ENCODE measurements at regions of chr13 and their contacts with region 1.

Region 1: DNA sequence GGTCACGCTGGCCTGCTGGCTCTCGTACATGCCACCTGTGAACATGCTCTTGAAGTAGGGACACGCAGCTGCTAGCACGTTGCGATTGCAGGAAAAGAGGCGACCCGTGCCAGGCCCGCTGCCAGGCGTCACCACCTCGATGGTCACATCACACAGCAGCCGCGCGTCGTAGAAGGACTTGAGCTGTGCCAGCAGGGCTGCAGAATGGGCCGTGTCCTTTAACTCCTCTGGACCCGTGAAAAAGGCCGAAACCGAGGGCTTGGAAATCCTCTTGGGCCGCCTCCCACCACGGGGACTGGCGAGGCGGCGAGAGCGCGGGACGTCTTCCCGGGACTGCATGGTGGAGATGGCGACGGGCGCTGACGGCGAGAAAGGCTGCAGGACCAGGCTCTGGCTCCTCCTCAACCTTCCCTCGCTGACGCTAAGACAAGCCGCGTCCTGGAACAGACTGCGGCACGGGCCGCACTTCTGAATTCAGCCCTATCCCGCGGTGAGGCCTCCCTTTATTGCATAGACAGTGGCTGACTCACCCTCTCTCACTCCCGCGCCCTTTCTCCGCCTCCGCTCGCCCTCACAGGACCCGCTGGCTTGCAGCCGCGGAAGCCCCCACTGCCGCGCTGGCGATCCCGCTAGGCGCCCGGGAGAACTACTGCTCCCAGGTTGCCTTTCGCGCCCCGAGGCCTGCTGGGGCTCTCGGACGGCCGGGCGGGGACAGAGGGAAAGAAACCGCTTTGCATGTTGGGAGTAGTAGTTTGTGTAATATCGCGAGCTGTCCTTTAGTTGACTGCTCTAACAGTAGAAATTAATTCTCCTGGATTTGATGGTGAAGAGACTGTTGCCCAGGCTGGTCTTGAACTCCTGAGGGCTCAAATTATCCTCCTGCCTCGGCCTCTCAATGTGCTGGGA is at the start of gene KBTBD7:
- DNase-seq: peak; percentile 96 to 98
- ATAC-seq: peak; percentile 98
- H3K4me3 ChIP-seq: peak within 1 kb of the TSS; percentile 24 to 67
- H3K27ac ChIP-seq: peak within 1 kb of the TSS in 1 of 2 donors; percentile 48
- H3K4me1 ChIP-seq: peaks cover 0 to 5% of the 10 kb centered on the region in 2 donors
- H3K27me3 ChIP-seq: no peaks in the 10 kb centered on the region
- total RNA-seq, gene KBTBD7: 5.4 to 6.9 TPM

Region 2: DNA sequence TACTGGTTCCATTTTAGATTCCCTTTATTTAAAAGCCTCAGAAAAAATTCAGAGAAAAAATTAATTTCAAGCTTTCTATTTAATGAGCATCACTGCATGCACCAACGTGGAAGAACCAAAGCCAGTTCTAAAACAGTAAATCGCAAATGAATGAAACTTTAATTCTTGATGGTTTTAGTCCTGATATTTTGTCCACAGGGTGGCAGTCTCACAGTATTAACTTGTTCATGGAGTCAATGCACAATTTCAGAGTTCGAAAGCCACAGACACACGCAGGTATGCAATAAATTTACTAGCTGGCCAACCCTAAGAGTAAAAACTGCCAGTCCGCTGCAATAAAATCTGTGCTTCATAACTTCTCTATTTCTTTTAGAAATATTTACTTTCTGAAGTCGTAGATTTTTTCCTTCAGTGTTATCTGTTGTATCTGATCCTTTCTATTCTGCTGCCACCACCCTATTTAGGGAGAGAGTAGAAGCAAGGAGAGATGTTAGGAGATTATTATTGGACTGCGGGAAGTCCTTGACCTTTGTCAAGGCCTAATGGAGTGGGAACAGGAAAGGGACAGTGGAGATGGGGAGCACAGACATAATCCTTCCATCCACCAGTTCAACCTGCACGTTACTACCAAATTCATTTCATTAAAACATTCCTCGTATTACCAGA is 139.8 kb before region 1 on chr13:
- intact Hi-C with region 1: loop called in 1 of 2 experiments (anchors 5 kb)
- DNase-seq: no peak
- ATAC-seq: peak; percentile 55
- H3K4me3 ChIP-seq: no peak overlapping the region
- H3K27ac ChIP-seq: no peak overlapping the region
- H3K4me1 ChIP-seq: peaks cover 4 to 6% of the 10 kb centered on the region in 2 donors
- H3K27me3 ChIP-seq: no peaks in the 10 kb centered on the region

Region 3: GRCh38 chr13:41061075-41061913 is 132.9 kb before region 1 on chr13 and contains the start of gene WBP4:
- intact Hi-C with region 1: loop called (anchors 5 to 10 kb)
- DNase-seq: peak; percentile 96 to 98
- ATAC-seq: peak; percentile 94
- H3K4me3 ChIP-seq: peak within 1 kb of the TSS; percentile 36 to 97
- H3K27ac ChIP-seq: peak within 1 kb of the TSS; percentile 94 to 96
- H3K4me1 ChIP-seq: peaks cover 1 to 7% of the 10 kb centered on the region in 2 donors
- H3K27me3 ChIP-seq: no peaks in the 10 kb centered on the region
- total RNA-seq, gene WBP4: 11.2 to 14.3 TPM

Region 4: GRCh38 chr13:41132512-41133152 is 61.5 kb before region 1 on chr13 and contains the start of gene KBTBD6:
- intact Hi-C with region 1: loop called (anchors 2 to 5 kb)
- DNase-seq: peak; percentile 98 to 99
- ATAC-seq: peak; percentile 99
- H3K4me3 ChIP-seq: peak within 1 kb of the TSS; percentile 50 to 61
- H3K27ac ChIP-seq: peak within 1 kb of the TSS in 1 of 2 donors; percentile 80
- H3K4me1 ChIP-seq: peaks cover 3 to 7% of the 10 kb centered on the region in 2 donors
- H3K27me3 ChIP-seq: no peaks in the 10 kb centered on the region
- total RNA-seq, gene KBTBD6: 4.3 to 7.7 TPM

Measured in aorta (tissue), 5 donors.